ENCODE measurements at regions of chr9 and their contacts with region 1.

Region 1: DNA sequence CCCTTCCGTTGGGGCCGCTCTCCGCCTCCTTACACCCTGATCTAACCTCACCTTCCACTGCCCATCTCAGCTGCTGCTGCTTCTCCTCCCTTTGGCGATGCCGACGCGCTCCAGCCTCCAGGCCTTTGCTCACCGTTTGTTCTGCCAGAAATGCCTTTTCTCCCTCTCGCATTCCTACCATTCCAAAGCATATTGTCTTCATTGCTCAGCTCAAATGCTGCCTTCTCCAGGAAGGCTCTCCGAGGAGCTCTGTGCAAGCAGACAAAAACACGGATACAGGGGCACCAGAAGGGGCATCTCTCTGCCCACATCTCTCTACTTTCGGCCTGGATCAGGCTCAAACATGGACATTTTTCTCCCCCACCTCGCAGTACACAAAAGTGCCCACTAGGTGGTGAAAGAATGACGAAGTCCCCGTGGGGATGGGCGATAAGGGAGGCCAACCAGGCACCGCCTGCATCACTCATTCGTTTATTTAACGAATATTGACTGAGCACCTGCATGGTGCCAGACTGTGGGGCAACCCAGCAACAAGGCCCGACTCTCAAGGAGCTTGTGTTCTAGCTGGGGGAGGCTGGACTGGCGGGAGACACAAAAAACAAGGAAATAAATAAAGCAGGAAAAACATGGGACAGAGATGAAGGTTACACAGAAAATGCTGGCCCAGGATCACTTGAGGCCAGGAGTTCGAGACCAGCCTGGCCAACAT is 7.3 kb upstream of the GRHPR start:
- DNase-seq: peak; percentile 67
- ATAC-seq: peak; percentile 83

Region 2: DNA sequence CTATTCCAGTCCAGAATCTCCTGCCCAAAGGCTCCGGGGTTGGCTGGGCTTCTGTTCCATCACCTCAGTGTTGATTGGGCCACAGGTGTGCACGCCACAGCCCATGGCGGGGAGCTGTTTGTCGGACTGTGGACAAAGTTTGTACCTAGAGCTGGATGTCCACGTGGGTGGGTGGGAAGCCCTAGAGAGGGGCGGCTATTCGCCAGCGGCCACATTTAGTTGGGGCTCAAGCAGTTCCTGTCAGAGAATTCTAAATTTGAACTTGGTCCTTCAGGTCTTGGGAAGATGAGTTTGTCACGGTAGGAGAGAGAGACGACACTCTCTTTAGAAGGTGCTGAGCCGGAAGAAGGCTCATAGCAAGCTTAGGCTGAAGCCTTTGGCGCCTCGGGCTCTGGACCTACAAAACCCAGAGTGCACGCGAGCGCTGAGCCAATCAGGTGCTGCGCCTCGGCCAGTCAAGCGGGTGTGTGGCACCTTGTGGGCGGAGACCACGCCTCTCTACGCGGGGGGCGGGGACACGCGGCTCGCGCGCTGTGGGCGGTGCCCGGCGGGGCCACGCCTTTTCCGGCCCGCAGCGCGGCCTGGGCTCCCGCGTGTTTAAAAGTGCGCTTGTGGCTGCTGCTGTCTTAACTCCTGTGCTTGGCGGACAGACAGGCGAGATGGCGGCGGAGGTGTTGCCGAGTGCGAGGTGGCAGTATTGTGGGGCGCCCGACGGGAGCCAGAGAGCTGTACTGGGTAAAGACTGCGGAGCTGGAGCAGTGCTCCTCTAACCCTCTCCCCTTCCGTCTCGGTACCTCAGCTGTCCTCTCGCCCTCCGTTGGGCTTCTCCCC is 70.4 kb after region 1 on chr9 and contains the start of gene POLR1E:
- intact Hi-C with region 1: loop called (anchors 10 kb)
- DNase-seq: peak; percentile 97
- ATAC-seq: peak; percentile 99
- total RNA-seq, gene POLR1E: 10.2 TPM

Measured in Right ventricle myocardium superior (tissue), 1 donor.